ENCODE measurements at regions of chr19 and their contacts with region 1.

Region 1: GRCh38 chr19:18112989-18113478 is 15.5 kb downstream of the MAST3 start:
- DNase-seq: peak; percentile 76
- CTCF ChIP-seq: peak; percentile 90

Region 2: DNA sequence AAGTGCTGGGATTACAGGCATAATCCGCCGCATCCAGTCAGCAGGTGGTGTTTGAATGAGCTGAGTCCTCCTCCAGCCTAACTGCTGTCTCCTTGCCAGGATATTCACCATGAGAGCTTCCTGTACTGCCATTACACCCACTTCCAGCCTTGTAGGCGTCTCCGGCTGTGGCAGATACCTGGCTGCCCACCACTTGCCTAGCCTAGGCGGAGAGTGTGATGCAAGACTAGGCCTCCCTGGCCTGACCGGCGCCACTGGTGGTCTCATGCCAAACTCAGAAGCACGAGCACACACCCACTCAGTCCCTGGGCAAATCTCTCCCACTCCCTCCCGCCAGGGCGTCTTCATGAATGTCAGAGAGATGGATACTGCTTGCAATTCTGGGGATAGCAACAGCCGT is 42.9 kb before region 1 on chr19:
- CTCF ChIA-PET with region 1: no interaction called
- POLR2A ChIA-PET with region 1: no interaction called
- DNase-seq: no peak
- CTCF ChIP-seq: no peak

Region 3: DNA sequence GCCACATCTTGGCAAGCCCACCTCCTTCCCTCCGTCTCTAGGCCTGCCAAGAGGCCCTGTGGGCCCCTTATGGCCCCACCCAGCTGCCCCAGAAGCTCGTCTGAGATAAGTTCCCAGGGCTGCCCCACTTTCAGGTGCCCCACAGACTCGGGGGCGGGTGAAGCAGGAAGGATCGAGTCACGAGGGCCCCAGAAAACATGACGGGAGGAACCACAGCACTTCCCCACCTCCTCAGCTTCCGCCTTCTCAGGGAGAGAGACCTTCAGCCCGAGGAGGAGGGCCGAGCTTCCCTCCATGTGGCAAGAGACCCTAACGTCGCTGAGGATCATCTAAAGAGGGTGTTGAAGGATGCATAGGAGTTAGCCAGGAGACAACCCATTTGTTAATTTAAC is 21.8 kb before region 1 on chr19:
- CTCF ChIA-PET with region 1: interaction called, 11 read pairs
- POLR2A ChIA-PET with region 1: interaction called, 5 read pairs
- DNase-seq: peak; percentile 67
- CTCF ChIP-seq: no peak

Region 4: GRCh38 chr19:18097217-18097992 is 15.6 kb before region 1 on chr19 and contains the start of gene MAST3:
- CTCF ChIA-PET with region 1: interaction called, 28 read pairs
- POLR2A ChIA-PET with region 1: interaction called, 4 read pairs
- DNase-seq: peak; percentile 98
- CTCF ChIP-seq: no peak

Region 5: DNA sequence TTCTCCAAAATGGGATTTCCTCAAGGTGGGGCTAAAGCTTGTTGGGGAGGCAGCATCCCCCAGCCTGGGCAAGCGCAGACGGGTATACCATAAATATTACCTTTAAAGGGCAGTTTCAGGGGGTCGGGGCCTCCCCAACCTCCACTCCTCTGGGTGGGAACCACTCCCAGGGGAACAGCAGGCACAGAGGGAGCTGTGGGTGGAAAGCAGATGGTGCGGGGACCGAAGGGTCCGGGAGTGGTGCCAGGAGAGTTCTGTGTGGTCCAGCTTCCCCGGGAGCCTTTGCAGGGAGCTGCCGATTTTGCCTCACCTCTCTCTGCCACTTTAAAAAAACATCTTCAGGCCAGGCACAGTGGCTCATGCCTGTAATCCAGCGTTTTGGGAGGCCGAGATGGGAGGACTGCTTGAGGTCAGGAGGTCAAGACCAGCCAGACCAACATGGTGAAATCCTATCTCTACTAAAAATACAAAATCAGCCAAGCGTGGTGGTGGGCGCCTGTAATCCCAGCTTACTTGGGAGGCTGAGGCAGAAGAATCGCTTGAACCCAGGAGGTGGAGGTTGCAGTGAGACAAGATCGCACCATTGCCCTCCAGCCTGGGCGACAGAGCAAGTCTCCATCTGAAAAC is 10.0 kb before region 1 on chr19:
- CTCF ChIA-PET with region 1: interaction called, 28 read pairs
- POLR2A ChIA-PET with region 1: interaction called, 4 read pairs
- DNase-seq: no peak
- CTCF ChIP-seq: no peak

Region 6: DNA sequence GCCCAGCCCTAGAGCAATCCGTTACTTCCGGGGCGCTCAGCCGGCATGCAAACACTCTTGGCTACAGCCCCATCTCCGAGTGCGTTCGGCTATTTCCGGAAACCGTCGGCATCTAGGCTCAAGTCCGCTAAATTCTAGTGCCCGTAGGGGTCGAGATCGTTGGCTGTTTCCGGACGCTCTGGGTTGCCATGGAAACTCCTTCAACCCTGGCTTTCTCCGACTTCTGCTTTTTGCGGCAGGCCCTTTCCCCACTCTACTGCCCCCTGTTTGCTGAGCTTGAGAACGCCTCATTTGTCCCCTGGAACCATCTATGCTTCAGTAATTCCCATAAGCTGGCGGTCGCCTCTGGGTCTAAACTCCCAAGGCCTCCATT is 39.4 kb after region 1 on chr19:
- CTCF ChIA-PET with region 1: interaction called, 12 read pairs
- POLR2A ChIA-PET with region 1: no interaction called
- DNase-seq: peak; percentile 100
- CTCF ChIP-seq: peak; percentile 55

Region 7: GRCh38 chr19:18167975-18168645 is 55.1 kb after region 1 on chr19:
- CTCF ChIA-PET with region 1: interaction called, 18 read pairs
- POLR2A ChIA-PET with region 1: no interaction called
- DNase-seq: peak; percentile 89
- CTCF ChIP-seq: peak; percentile 79